MCF 10A (cell line): ENCODE measurements at regions of chr11 and their contacts with region 1.

Region 1: GRCh38 chr11:67592880-67593564 is 9.4 kb downstream of the GSTP1 start:
- DNase-seq: no peak
- H3K4me3 Mint-ChIP-seq: no peak overlapping the region
- H3K27ac Mint-ChIP-seq: no peak overlapping the region
- H3K4me1 Mint-ChIP-seq: peaks cover 6% of the 10 kb centered on the region
- H3K27me3 Mint-ChIP-seq: no peaks in the 10 kb centered on the region
- CTCF ChIP-seq: no peak

Region 2: DNA sequence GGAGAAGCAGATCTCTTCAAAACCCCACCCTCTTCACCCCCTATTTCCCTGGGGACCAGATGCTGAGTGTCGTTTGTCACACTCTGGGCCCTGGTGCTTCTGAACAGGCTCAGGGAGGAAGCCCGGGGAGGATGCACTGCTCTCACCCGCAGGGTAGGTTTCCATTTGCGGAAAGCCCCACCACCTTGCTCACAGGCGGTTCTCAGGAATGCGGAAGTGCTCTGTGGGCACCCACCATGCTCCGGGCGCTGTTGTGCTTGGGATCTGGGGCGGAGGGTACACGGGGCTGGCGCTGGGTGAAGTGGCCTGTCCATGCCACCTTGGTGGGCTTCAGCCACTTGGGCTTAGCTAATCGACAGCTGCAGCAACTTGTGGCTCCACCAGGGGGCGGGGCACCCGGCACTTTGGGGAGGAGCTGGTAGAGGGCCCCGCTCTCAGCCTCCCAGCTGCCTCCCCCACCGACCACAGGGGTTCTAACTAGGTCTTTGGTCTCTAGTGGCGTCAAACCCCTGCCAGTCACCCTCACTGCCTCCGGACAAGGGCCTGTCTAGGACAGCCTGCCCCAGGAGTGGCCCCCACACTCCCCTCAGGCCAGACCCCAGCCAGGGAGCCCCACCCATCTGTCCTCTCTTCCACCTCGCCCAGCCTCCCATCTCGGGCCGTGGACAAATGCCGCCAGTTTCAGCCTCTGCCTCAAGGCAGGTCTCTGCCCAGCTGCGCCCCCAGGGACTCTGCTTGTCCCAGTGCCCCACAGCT is 21.1 kb after region 1 on chr11:
- CTCF ChIA-PET with region 1: no interaction called
- POLR2A ChIA-PET with region 1: interaction called, 12 read pairs
- intact Hi-C with region 1: no loop called
- DNase-seq: peak; percentile 54
- H3K4me3 Mint-ChIP-seq: peak overlapping the region; percentile 53
- H3K27ac Mint-ChIP-seq: peak overlapping the region; percentile 79
- H3K4me1 Mint-ChIP-seq: peaks cover 4% of the 10 kb centered on the region
- H3K27me3 Mint-ChIP-seq: peaks cover 19% of the 10 kb centered on the region
- CTCF ChIP-seq: peak; percentile 90

Region 3: DNA sequence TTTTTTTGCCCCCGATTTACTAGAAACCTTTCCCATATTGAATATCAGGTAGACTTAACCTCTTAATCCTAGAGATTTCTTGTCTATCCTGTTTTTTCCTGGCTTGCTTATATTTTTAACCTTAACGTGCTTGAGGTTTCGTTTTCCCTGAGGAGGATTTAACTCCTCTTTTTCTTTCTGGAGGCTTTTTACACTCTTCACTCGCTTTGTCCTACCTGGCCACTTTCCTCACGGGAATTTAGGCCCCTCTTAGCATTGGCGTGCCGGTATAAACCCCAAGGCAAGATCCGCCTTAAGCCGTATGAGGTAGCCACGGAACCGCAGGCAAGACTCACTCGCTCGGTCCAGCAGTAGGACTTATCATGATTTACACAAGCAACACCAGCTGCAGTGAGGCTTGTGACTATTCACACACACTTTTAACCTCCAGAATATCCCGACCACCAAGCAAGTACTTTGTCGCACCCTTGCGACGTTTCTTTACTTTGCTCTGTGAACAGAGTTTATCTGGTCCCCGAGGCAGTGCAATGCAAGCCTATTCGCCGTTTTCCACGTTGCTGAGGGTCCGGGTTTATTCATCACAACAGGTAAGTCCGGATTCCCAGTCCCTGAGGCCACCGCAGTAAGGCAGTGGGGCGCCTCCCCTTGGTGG is 102.0 kb after region 1 on chr11:
- CTCF ChIA-PET with region 1: no interaction called
- POLR2A ChIA-PET with region 1: no interaction called
- intact Hi-C with region 1: no loop called
- DNase-seq: no peak
- H3K4me3 Mint-ChIP-seq: no peak overlapping the region
- H3K27ac Mint-ChIP-seq: no peak overlapping the region
- H3K4me1 Mint-ChIP-seq: peaks cover 9% of the 10 kb centered on the region
- H3K27me3 Mint-ChIP-seq: no peaks in the 10 kb centered on the region
- CTCF ChIP-seq: no peak